CD8-positive, alpha-beta T cell (primary cell): ENCODE measurements at regions of chrX and their contacts with region 1.

Region 1: DNA sequence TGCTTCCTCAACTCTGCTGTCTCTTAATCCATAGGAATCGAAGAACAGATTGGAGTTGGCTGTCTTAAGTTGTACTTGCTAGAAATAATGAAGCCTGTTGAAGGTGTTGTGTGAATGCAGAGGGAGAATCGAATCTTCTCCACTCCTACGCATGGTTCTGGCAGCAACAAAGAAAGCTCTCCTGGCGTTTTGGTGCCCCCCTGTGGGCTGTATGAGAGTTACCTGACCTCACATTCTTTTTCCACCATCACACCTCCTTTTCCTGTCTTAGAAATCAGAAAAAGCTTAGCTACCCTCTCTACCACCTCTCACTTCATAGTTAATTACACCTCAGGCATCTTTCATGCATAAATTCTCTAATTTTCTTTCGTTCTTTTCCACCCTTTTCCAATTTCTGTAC is 16.3 kb downstream of the KLF8 start:
- DNase-seq: peak; percentile 17 to 69 (median 50)
- ATAC-seq: peak; percentile 62
- H3K4me3 ChIP-seq: no peak overlapping the region
- H3K4me3 Mint-ChIP-seq: no peak overlapping the region
- H3K27ac ChIP-seq: no peak overlapping the region
- H3K27ac Mint-ChIP-seq: no peak overlapping the region
- H3K4me1 ChIP-seq: no peaks in the 10 kb centered on the region
- H3K4me1 Mint-ChIP-seq: peaks cover 4% of the 10 kb centered on the region
- H3K27me3 ChIP-seq: no peaks in the 10 kb centered on the region
- H3K27me3 Mint-ChIP-seq: no peaks in the 10 kb centered on the region
- CTCF ChIP-seq: peak; percentile 61

Region 2: DNA sequence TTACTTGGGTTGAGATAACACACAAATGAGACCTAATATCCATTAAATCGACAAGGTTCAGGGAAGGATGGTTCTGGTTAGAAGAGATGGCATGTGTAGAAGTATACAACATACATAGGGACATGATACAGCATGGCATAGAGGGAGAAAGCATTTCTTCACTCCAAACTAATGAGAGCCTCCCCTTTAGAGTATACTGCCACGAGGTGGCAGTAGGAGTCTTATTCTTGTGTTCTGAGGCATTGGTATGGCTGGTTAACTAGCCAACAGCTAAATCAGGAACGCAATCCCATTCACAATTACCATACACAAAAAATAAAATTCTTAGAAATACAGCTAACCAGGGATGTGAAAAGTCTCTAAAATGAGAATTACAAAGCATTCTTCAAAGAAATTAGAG is 1356.9 kb before region 1 on chrX:
- CTCF ChIA-PET with region 1: interaction called, 4 read pairs
- POLR2A ChIA-PET with region 1: no interaction called
- intact Hi-C with region 1: loop called (anchors 5 kb)
- DNase-seq: peak in 8 of 9 experiments; percentile 1 to 67 (median 25)
- ATAC-seq: peak; percentile 38
- H3K4me3 ChIP-seq: no peak overlapping the region
- H3K4me3 Mint-ChIP-seq: no peak overlapping the region
- H3K27ac ChIP-seq: no peak overlapping the region
- H3K27ac Mint-ChIP-seq: no peak overlapping the region
- H3K4me1 ChIP-seq: no peaks in the 10 kb centered on the region
- H3K4me1 Mint-ChIP-seq: no peaks in the 10 kb centered on the region
- H3K27me3 ChIP-seq: no peaks in the 10 kb centered on the region
- H3K27me3 Mint-ChIP-seq: peaks cover 12% of the 10 kb centered on the region
- CTCF ChIP-seq: peak; percentile 18

Region 3: GRCh38 chrX:55135171-55135570 is 1113.3 kb before region 1 on chrX:
- CTCF ChIA-PET with region 1: interaction called, 17 read pairs
- POLR2A ChIA-PET with region 1: no interaction called
- intact Hi-C with region 1: loop called (anchors 1 to 5 kb)
- DNase-seq: peak in 7 of 9 experiments; percentile 0 to 46 (median 21)
- ATAC-seq: no peak
- H3K4me3 ChIP-seq: no peak overlapping the region
- H3K4me3 Mint-ChIP-seq: no peak overlapping the region
- H3K27ac ChIP-seq: no peak overlapping the region
- H3K27ac Mint-ChIP-seq: no peak overlapping the region
- H3K4me1 ChIP-seq: no peaks in the 10 kb centered on the region
- H3K4me1 Mint-ChIP-seq: no peaks in the 10 kb centered on the region
- H3K27me3 ChIP-seq: no peaks in the 10 kb centered on the region
- H3K27me3 Mint-ChIP-seq: no peaks in the 10 kb centered on the region
- CTCF ChIP-seq: peak; percentile 24

Region 4: GRCh38 chrX:55907968-55908607 is 340.4 kb before region 1 on chrX:
- CTCF ChIA-PET with region 1: no interaction called
- POLR2A ChIA-PET with region 1: no interaction called
- intact Hi-C with region 1: loop called in 1 of 2 experiments (anchors 5 kb)
- DNase-seq: peak in 8 of 9 experiments; percentile 13 to 62 (median 38)
- ATAC-seq: peak; percentile 66
- H3K4me3 ChIP-seq: peak overlapping the region; percentile 78 to 80
- H3K4me3 Mint-ChIP-seq: peak overlapping the region; percentile 95
- H3K27ac ChIP-seq: peak overlapping the region; percentile 26 to 43
- H3K27ac Mint-ChIP-seq: peak overlapping the region; percentile 88
- H3K4me1 ChIP-seq: no peaks in the 10 kb centered on the region
- H3K4me1 Mint-ChIP-seq: peaks cover 24% of the 10 kb centered on the region
- H3K27me3 ChIP-seq: no peaks in the 10 kb centered on the region
- H3K27me3 Mint-ChIP-seq: no peaks in the 10 kb centered on the region
- CTCF ChIP-seq: peak; percentile 44